ENCODE measurements at regions of chr18 and their contacts with region 1.

Region 1: DNA sequence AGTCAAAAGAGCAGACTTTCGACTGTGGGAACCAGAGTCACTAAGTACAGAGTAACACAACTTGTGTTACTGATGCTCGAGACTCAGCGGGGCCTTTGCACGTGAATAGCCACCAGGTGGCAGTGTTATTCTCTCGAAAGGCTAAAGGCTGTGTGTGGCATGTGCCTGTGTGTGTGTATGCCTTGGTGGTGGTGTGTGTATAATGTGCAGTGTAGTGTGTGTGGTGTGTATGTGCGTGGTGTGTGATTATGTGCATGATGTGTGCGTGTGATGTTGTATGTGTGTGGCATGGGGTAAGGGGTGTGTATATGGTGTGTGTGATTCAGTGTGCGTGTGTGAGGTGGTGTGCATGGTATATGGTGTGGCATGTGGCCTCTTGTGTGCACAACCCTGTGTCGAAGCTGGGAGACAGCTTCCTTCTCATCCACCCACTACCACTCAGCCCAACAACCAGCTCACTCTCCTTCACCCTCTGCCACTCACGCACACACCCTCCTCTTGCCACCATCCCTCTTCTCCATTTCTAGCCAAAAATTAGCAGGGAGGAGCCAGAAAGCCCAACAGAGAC is 83.0 kb upstream of the ZNF532 start:
- DNase-seq: peak; percentile 82
- ATAC-seq: peak; percentile 94
- H3K4me3 Mint-ChIP-seq: no peak overlapping the region
- H3K27ac Mint-ChIP-seq: no peak overlapping the region
- H3K4me1 Mint-ChIP-seq: no peaks in the 10 kb centered on the region
- H3K27me3 Mint-ChIP-seq: peaks cover 12% of the 10 kb centered on the region

Region 2: DNA sequence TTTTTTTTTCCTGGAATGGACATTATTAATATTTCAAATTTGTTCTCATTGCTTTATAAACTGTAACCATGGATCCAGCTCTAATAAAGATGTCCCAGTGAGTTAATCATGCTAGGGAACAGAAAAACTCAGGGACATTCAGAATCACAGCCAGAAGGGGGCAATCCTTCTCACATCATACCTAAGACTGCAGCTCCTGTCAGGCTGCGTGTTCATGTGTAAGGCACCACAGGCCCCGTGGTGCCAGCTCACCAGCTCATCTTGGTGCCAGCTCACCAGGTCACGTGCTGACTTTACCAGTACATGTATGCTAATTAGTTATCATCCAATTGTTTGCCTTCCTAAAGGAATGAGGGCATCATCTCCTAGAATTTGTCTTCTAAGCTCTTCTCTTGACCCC is 822.4 kb before region 1 on chr18:
- CTCF ChIA-PET with region 1: no interaction called
- POLR2A ChIA-PET with region 1: no interaction called
- intact Hi-C with region 1: no loop called
- DNase-seq: peak; percentile 25
- ATAC-seq: peak; percentile 58
- H3K4me3 Mint-ChIP-seq: no peak overlapping the region
- H3K27ac Mint-ChIP-seq: no peak overlapping the region
- H3K4me1 Mint-ChIP-seq: no peaks in the 10 kb centered on the region
- H3K27me3 Mint-ChIP-seq: peaks cover 22% of the 10 kb centered on the region

Region 3: DNA sequence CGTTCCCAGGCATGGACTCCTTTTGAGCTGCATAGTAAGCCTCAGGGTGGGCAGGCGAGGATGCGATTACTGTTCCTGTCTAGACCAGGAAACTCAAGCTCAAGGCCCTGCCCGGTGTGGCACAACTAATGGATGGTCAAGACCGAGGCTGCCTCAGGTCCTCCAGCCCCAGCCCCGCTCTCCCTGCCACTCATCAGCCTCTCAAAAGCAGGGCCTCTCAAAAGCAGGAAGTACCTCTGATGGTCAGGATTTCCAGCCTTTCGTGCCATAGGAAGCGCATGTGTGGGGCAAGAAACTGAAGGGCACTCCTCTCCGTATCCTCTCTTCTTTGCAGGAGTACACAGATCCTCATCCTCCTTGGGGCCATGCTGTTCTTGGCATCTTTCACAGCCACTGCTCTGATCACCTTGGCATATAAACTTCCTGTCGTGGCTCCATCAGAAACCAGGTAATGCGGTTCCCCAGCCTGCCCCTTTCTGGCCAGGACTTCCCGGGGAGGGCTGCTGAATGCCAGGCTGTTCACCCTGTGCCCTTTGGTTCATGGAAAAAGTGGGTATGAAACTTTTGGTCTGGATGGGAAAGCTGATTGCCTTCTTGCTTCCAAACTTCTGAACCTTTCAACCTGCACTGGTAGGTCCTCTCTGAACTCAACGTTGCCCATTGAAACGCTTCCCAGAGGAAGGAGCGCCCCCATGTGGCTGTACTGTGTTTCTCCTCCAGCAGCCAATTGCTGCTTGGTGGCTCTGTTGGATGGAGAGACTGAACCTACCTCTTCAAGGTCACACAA is 275.2 kb after region 1 on chr18:
- CTCF ChIA-PET with region 1: interaction called, 5 read pairs
- POLR2A ChIA-PET with region 1: no interaction called
- intact Hi-C with region 1: loop called (anchors 1 kb)
- DNase-seq: peak; percentile 90
- ATAC-seq: peak; percentile 79
- H3K4me3 Mint-ChIP-seq: no peak overlapping the region
- H3K27ac Mint-ChIP-seq: no peak overlapping the region
- H3K4me1 Mint-ChIP-seq: peaks cover 2% of the 10 kb centered on the region
- H3K27me3 Mint-ChIP-seq: peaks cover 11% of the 10 kb centered on the region